GM10248 (cell line): ENCODE measurements at regions of chr6 and their contacts with region 1.

Region 1: GRCh38 chr6:35468181-35468979 is at the start of gene RPL10A:
- DNase-seq: peak; percentile 98
- CTCF ChIP-seq: peak; percentile 97

Region 2: DNA sequence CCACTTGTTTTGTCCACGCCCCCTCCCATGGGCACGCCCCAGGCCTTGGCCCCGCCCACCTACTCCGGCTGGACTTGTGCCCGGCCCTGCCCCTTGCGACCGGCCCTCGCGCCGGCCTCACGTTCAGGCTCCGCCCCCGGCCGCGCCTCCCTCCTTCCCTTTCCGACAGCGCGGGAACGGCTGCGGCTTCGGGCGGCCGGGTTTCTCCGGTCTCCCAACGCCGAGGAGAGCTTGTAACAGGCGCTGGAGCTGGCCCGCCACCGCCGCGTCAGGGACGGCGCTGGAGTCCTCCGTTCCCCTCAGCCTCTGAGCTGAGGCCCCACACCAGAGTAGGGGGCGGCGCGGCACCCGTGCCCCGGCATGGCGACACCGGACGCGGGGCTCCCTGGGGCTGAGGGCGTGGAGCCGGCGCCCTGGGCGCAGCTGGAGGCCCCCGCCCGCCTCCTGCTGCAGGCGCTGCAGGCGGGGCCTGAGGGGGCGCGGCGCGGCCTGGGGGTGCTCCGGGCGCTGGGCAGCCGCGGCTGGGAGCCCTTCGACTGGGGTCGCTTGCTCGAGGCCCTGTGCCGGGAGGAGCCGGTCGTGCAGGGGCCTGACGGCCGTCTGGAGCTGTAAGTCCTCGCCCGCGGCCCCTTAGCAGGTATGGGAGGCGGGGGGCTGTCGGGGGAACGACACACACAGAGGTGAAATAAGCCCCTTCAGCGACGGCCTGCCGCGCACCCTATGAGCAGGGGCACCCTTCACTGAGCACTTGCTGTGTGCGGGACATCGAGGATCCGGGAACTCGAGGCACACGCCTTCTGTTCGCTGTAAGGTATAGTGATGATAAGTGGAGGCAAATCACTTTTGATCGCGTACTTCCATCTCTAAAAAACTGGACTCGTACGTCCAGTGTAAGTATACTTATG is 15.9 kb before region 1 on chr6 and contains the start of gene FANCE:
- CTCF ChIA-PET with region 1: interaction called, 17 read pairs
- POLR2A ChIA-PET with region 1: interaction called, 3 read pairs
- DNase-seq: peak; percentile 98
- CTCF ChIP-seq: no peak

Region 3: DNA sequence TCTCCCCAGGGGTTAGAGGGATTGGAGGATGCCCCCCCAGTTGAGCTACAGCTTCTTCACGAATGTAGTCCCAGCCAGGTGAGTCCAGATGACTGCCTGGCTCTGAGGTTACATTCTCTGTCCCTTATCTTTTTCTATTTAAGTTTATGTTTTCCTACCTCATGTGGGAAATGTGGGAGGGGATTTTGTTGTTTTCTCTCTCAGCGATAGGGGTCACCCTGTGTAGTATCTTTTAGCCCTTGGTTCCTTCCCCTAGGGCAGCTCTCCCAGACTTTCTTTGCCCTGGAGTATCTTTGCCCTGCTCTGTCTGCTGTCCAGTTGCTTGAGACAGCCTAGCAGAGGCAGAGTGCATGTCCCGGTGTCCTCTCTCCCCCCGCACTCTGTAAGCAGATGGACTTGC is 10.5 kb before region 1 on chr6:
- CTCF ChIA-PET with region 1: interaction called, 17 read pairs
- POLR2A ChIA-PET with region 1: interaction called, 3 read pairs
- DNase-seq: no peak
- CTCF ChIP-seq: no peak

Region 4: GRCh38 chr6:35484871-35485392 is 16.6 kb after region 1 on chr6:
- CTCF ChIA-PET with region 1: interaction called, 15 read pairs
- POLR2A ChIA-PET with region 1: interaction called, 6 read pairs
- DNase-seq: no peak
- CTCF ChIP-seq: no peak

Region 5: GRCh38 chr6:35713006-35713767 is 244.8 kb after region 1 on chr6:
- CTCF ChIA-PET with region 1: no interaction called
- POLR2A ChIA-PET with region 1: no interaction called
- DNase-seq: peak; percentile 22
- CTCF ChIP-seq: no peak